ENCODE measurements at regions of chr11 and their contacts with region 1.

Region 1: DNA sequence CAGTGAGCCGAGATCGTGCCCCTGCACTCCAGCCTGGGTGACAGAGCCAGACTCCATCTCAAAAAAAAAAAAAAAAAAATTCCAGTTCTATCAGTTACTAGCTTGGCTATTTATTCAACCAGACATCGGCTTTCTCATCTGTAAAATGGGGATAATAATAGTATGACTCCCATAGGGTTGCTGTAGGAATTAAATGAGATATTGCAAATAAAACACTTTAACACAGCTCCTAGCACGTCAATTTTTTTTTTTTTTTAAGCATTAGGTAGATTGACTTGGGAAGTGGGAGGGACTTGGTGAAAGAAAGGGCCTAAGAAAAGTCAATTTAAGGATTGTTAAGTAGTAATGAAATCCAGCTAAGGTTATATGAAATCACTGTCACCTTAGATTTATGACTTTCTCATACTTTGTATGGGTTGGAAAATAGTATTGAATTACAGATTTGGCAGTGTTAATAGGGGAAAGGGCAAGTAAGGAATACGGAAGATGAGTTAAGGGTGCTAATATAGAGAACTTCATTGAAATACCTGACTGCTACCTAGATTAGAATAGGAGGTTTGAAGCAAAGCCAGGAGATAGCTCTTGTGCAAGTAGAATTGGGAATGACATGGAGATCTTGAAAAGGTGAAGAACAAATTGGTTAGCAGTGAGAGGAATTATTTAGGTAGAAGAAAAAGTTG is 28.8 kb downstream of the BIRC2 start:
- DNase-seq: no peak
- H3K4me3 Mint-ChIP-seq: no peak overlapping the region
- H3K27ac Mint-ChIP-seq: no peak overlapping the region
- H3K4me1 Mint-ChIP-seq: peaks cover 22% of the 10 kb centered on the region
- H3K27me3 Mint-ChIP-seq: no peaks in the 10 kb centered on the region

Region 2: GRCh38 chr11:102332611-102332994 is 43.3 kb before region 1 on chr11:
- CTCF ChIA-PET with region 1: no interaction called
- POLR2A ChIA-PET with region 1: no interaction called
- DNase-seq: no peak
- H3K4me3 Mint-ChIP-seq: no peak overlapping the region
- H3K27ac Mint-ChIP-seq: no peak overlapping the region
- H3K4me1 Mint-ChIP-seq: peaks cover 3% of the 10 kb centered on the region
- H3K27me3 Mint-ChIP-seq: no peaks in the 10 kb centered on the region

Region 3: GRCh38 chr11:102347462-102348370 is 28.1 kb before region 1 on chr11:
- CTCF ChIA-PET with region 1: no interaction called
- POLR2A ChIA-PET with region 1: no interaction called
- DNase-seq: peak; percentile 24
- H3K4me3 Mint-ChIP-seq: peak overlapping the region; percentile 91
- H3K27ac Mint-ChIP-seq: peak overlapping the region; percentile 99
- H3K4me1 Mint-ChIP-seq: peaks cover 30% of the 10 kb centered on the region
- H3K27me3 Mint-ChIP-seq: no peaks in the 10 kb centered on the region

Region 4: DNA sequence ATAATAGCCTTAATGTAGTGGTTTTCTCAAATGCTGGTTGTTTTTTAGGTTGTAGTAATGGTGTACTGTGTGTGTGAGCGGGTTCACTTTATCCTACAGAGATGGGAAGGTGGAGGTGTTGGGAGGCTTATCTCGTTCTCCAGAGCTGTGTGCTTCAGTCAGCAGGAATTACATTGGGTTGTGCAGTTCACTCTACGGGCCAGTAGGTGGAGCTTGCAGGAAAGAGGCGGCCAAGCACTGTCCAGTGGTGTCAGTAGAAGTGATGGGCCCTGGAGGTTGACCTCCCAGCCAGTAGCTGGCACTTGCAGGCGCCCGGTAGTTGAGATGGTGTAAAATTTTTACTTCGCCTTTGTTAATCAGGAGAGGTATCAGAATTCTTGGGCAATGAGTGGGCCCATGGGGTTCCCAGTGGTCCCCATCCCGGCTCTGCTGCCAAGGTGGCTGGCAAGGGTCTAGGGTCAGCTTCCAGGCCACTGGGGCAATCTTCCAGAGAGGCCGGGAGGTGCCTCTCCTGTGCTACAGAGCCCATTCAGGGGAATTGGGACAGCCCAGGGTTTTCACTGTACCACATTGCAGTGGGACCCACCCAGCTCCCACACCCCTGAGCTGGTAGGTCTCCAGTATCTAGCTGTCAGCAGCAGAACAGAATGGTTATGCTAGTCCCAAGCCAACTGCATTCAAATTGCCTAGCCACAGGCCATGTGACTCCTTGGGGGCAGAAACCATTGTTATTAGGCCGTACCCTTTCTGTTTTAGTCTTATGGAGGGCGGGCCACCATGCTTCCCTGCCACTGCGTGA is 15.0 kb after region 1 on chr11:
- CTCF ChIA-PET with region 1: interaction called, 31 read pairs
- POLR2A ChIA-PET with region 1: no interaction called
- DNase-seq: peak; percentile 61
- H3K4me3 Mint-ChIP-seq: no peak overlapping the region
- H3K27ac Mint-ChIP-seq: peak overlapping the region; percentile 3
- H3K4me1 Mint-ChIP-seq: peaks cover 43% of the 10 kb centered on the region
- H3K27me3 Mint-ChIP-seq: no peaks in the 10 kb centered on the region